ENCODE measurements at regions of chr1 and their contacts with region 1.

Region 1: GRCh38 chr1:156920233-156921052 is at the start of gene LRRC71:
- DNase-seq: no peak
- ATAC-seq: peak; percentile 98
- H3K4me3 ChIP-seq: peak within 1 kb of the TSS; percentile 28 to 47
- H3K27ac ChIP-seq: 0 out of 2 replicates have a peak within 1 kb of the TSS, but pooled peaks have one; percentile 20
- H3K4me1 ChIP-seq: peaks cover 3% of the 10 kb centered on the region; the same call in 1 of the 2 replicates
- H3K27me3 ChIP-seq: no peaks in the 10 kb centered on the region
- CTCF ChIP-seq: peak; percentile 98
- total RNA-seq, gene LRRC71: 0.77 TPM

Region 2: GRCh38 chr1:156639601-156640101 is 280.8 kb before region 1 on chr1:
- CTCF ChIA-PET with region 1: interaction called, 10 read pairs
- POLR2A ChIA-PET with region 1: no interaction called
- in situ Hi-C with region 1: no loop called
- intact Hi-C with region 1: no loop called
- DNase-seq: no peak
- ATAC-seq: peak; percentile 90
- H3K4me3 ChIP-seq: no peak overlapping the region; a peak in 1 of 4 replicates
- H3K27ac ChIP-seq: peak overlapping the region; percentile 36
- H3K4me1 ChIP-seq: peaks cover 23% of the 10 kb centered on the region
- H3K27me3 ChIP-seq: no peaks in the 10 kb centered on the region
- CTCF ChIP-seq: no peak